T-cell (primary cell): ENCODE measurements at regions of chr2 and their contacts with region 1.

Region 1: GRCh38 chr2:128344101-128344500 is 25.4 kb upstream of the HS6ST1 start:
- DNase-seq: no peak
- ATAC-seq: no peak
- H3K4me3 ChIP-seq: no peak overlapping the region
- H3K4me3 Mint-ChIP-seq: no peak overlapping the region
- H3K27ac ChIP-seq: no peak overlapping the region
- H3K27ac Mint-ChIP-seq: no peak overlapping the region
- H3K4me1 ChIP-seq: no peaks in the 10 kb centered on the region
- H3K4me1 Mint-ChIP-seq: no peaks in the 10 kb centered on the region
- H3K27me3 ChIP-seq: peaks cover 0 to 26% of the 10 kb centered on the region in 2 experiments
- H3K27me3 Mint-ChIP-seq: peaks cover 0 to 1% of the 10 kb centered on the region in 2 donors

Region 2: GRCh38 chr2:128714851-128715312 is 370.8 kb after region 1 on chr2:
- CTCF ChIA-PET with region 1: no interaction called
- POLR2A ChIA-PET with region 1: interaction called in 1 of 2 experiments, 14 read pairs
- DNase-seq: no peak
- ATAC-seq: no peak
- H3K4me3 ChIP-seq: no peak overlapping the region
- H3K4me3 Mint-ChIP-seq: no peak overlapping the region
- H3K27ac ChIP-seq: no peak overlapping the region
- H3K27ac Mint-ChIP-seq: no peak overlapping the region
- H3K4me1 ChIP-seq: no peaks in the 10 kb centered on the region
- H3K4me1 Mint-ChIP-seq: no peaks in the 10 kb centered on the region
- H3K27me3 ChIP-seq: peaks cover 0 to 32% of the 10 kb centered on the region in 2 experiments
- H3K27me3 Mint-ChIP-seq: peaks cover 18 to 32% of the 10 kb centered on the region in 2 donors